ENCODE measurements at regions of chr4 and their contacts with region 1.

Region 1: DNA sequence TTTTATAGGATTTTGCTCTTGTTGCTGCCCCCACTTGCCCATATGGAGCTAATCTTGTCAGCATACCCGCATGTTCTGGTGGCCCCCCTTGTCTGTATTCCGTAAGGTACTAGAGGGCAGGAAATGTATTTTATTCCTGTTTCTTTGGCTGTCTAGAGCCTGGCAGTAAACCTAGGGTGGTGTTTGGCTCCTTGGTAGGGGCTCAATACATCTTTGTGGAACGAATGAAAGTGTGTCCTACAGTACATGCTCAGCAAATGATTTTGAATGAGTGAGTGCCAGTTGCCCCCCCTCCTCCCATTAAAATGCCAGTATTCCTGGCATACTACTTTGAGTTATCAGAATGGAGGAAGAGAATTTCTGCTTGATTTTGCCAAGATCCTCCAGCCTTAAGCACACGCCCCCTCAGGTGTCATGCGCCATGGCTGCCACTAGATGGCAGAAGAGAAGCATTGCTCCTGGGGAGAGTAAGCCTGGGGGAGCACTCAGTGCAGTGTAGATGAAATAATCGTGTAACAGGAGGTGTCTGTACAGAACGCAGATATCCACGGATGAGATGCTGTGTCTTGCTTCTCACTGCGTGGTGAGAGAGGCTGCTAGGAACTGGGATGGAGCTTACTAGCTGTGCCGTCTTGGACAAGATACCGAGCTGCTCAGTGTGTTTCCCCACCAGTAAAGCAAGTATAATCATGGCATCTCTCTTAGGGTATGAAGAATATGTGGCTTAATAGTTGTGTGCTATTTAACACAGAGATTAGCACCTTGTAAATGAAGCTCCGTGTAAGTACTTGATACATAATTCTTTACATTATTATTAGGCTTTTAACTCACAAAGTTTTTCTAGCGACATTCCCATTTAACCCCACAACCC is 17.2 kb upstream of the RNF212 start:
- DNase-seq: peak; percentile 64
- ATAC-seq: peak; percentile 97
- H3K4me3 ChIP-seq: no peak overlapping the region
- H3K27ac ChIP-seq: no peak overlapping the region
- H3K4me1 ChIP-seq: no peaks in the 10 kb centered on the region
- H3K27me3 ChIP-seq: no peaks in the 10 kb centered on the region
- CTCF ChIP-seq: peak; percentile 95

Region 2: DNA sequence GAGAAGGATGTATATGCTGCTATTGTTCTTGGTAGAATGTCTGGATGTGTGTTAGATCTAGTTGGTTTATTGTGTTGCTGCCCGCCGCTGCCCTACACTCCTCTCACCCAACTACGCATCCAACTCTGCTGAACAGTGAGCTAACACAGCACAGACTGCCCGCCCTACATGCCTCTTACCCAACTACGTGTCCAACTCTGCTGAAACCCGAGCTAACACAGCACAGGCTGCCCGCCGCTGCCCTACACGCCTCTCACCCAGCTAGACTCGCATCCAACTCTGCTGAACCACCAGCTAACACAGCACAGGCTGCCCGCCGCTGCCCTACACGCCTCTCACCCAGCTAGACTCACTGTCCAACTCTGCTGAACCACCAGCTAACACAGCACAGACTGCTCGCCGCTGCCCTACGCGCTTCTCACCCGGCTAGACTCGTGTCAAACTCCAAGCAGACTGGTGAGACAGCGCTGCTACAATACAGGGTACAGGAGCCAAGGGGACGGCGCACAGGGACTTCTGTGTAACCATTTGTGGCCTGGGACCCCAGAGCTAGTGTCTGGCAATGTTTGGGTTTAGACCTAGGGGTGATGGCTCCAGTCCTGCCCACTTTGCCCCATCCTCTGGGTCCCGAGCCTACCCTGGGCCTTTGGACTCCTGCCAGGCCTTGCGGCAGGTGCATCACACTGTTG is 130.0 kb after region 1 on chr4:
- CTCF ChIA-PET with region 1: no interaction called
- POLR2A ChIA-PET with region 1: no interaction called
- in situ Hi-C with region 1: no loop called
- intact Hi-C with region 1: loop called (anchors 10 kb)
- DNase-seq: no peak
- ATAC-seq: no peak
- H3K4me3 ChIP-seq: no peak overlapping the region
- H3K27ac ChIP-seq: no peak overlapping the region
- H3K4me1 ChIP-seq: no peaks in the 10 kb centered on the region
- H3K27me3 ChIP-seq: no peaks in the 10 kb centered on the region
- CTCF ChIP-seq: no peak

Measured in Panc1 (cell line).